ENCODE measurements at regions of chr4 and their contacts with region 1.

Region 1: DNA sequence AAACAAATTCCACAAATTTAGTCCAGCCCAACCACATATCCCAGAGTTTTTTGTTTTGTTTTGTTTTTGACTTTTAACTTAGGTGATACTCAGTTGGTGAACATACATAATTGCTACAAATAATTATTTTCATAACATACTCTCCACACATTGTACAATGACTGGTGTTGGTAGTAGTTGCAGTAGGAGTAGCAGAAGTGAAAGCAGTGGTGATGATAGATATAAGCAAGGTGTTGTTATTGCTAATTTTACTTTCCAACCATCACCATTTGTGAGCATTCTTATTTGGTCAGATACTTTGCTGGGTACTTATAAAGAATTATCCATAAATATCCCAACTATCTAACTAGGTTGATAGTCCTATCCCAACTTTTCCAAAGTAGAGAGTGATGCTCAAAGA is 47.3 kb downstream of the ARHGAP24 start:
- DNase-seq: no peak
- ATAC-seq: no peak
- H3K4me3 ChIP-seq: no peak overlapping the region
- H3K4me3 Mint-ChIP-seq: no peak overlapping the region
- H3K27ac ChIP-seq: no peak overlapping the region
- H3K27ac Mint-ChIP-seq: no peak overlapping the region
- H3K4me1 ChIP-seq: no peaks in the 10 kb centered on the region
- H3K4me1 Mint-ChIP-seq: no peaks in the 10 kb centered on the region
- H3K27me3 ChIP-seq: no peaks in the 10 kb centered on the region
- H3K27me3 Mint-ChIP-seq: no peaks in the 10 kb centered on the region

Region 2: DNA sequence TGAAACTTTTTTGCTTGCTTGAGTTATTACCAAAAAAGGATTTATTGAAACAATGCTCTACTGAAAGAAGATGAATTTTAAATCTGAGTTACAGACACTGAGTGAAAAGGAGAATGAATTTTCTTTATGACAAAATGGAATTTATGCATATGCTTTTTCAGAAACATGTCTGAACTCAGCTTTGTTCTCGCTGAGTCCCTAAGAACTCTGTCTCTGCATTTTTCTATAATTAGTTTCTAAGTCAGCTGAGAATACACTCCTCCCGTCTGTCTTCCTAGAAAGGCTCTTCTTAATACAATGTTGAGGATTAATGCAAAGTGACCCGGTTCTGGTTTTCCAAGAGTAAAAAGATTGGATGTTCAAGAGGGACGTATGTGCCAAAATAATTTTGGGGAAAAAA is 1486.7 kb before region 1 on chr4:
- CTCF ChIA-PET with region 1: no interaction called
- POLR2A ChIA-PET with region 1: no interaction called
- DNase-seq: no peak
- ATAC-seq: no peak
- H3K4me3 ChIP-seq: no peak overlapping the region
- H3K4me3 Mint-ChIP-seq: no peak overlapping the region
- H3K27ac ChIP-seq: no peak overlapping the region
- H3K27ac Mint-ChIP-seq: no peak overlapping the region
- H3K4me1 ChIP-seq: no peaks in the 10 kb centered on the region
- H3K4me1 Mint-ChIP-seq: no peaks in the 10 kb centered on the region
- H3K27me3 ChIP-seq: no peaks in the 10 kb centered on the region
- H3K27me3 Mint-ChIP-seq: peaks cover 0 to 4% of the 10 kb centered on the region in 2 donors

Region 3: DNA sequence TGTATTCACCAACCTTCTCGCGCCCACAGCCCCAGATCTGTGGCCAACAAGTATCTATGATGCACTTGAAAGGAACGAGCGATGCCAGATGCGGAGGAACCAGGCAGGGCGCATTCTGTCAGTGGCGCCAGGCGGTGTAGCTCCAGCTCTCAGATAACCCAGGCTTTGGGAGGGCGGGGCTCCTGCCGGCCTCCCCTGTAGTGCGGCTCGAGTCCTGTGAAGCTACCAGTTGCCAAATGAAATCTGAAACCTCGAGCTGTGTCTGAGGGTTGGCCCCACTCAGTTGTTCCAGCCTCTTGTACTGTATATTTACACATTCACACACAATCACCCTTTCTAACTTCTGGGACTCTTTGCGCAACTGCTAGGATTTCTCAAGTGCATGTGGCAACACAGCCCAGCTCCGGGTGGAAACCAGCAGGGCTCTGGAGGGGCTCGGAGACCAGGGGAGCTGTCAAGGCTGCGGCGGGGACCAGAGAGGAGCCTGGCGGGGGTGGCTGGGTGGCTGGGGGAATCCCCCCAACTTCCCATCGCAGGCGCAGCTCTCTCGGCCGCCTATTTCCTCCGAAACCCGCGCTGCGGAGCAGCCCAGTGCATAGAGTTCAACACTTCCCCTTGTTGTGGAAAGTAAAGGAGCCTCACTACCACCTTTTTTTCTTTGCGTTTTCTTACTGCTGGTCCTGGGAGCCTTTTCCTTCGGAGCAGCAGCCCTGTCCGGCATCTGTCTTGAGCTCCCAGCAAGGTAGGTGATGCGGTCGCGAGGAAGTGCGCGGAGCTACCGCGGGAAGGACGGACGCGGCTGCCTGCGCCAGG is 47.3 kb before region 1 on chr4 and contains the start of gene ARHGAP24:
- CTCF ChIA-PET with region 1: no interaction called
- POLR2A ChIA-PET with region 1: interaction called in 1 of 2 experiments, 14 read pairs
- DNase-seq: peak in 7 of 35 experiments; percentile 0 to 48 (median 5)
- ATAC-seq: peak in 3 of 4 experiments; percentile 19 to 39 (median 30)
- H3K4me3 ChIP-seq: peak within 1 kb of the TSS in 1 of 2 donors; percentile 40
- H3K4me3 Mint-ChIP-seq: peak within 1 kb of the TSS in 1 of 3 donors; percentile 39
- H3K27ac ChIP-seq: no peak within 1 kb of the TSS
- H3K27ac Mint-ChIP-seq: peak within 1 kb of the TSS in 1 of 2 donors; percentile 57
- H3K4me1 ChIP-seq: no peaks in the 10 kb centered on the region
- H3K4me1 Mint-ChIP-seq: peaks cover 0 to 2% (median 0%) of the 10 kb centered on the region in 3 donors
- H3K27me3 ChIP-seq: peaks cover 0 to 8% of the 10 kb centered on the region in 2 experiments
- H3K27me3 Mint-ChIP-seq: peaks cover 14 to 15% of the 10 kb centered on the region in 2 donors
- total RNA-seq, gene ARHGAP24: 0.45 to 2.7 (median 1.8) TPM

Region 4: DNA sequence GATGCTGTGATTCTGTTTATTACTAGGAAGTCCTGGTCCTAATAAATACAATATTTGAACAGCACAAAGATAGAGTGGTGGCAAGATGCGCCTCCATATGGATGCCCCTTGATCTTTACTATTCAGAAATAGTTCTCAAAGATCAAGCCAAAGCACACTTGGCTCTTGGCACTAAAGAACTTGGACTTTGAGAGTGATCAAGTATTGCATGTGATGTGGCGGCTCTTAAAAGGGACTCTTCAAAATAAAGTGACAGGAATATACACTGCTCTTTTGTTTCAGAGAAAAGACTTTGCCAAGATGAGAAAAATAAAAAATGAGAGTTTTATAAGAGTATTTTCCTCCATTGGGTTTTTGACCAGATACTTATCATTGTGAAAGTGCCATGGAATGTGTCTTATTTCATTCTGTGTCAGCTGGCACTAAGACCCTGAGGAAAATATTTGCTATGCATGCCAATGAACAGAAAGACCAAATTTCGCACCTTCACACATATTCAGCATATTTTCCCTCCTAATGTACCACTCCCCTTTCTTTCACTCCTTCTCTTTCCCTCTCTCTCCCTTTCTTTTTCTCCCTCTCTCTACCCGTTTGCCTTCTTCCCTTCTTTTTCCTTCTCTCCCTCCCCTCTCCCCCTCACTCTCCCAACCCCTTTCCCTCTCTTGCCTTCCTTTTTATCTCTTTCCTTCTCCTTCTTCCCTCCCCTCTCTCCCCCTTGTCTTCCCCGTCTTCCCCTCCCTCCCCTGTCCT is 12.2 kb before region 1 on chr4:
- CTCF ChIA-PET with region 1: no interaction called
- POLR2A ChIA-PET with region 1: no interaction called
- DNase-seq: no peak
- ATAC-seq: no peak
- H3K4me3 ChIP-seq: no peak overlapping the region
- H3K4me3 Mint-ChIP-seq: no peak overlapping the region
- H3K27ac ChIP-seq: no peak overlapping the region
- H3K27ac Mint-ChIP-seq: no peak overlapping the region
- H3K4me1 ChIP-seq: no peaks in the 10 kb centered on the region
- H3K4me1 Mint-ChIP-seq: no peaks in the 10 kb centered on the region
- H3K27me3 ChIP-seq: no peaks in the 10 kb centered on the region
- H3K27me3 Mint-ChIP-seq: no peaks in the 10 kb centered on the region

Region 5: GRCh38 chr4:85543832-85544231 is 21.6 kb after region 1 on chr4:
- CTCF ChIA-PET with region 1: interaction called in 1 of 2 experiments, 11 read pairs
- POLR2A ChIA-PET with region 1: no interaction called
- DNase-seq: no peak
- ATAC-seq: no peak
- H3K4me3 ChIP-seq: no peak overlapping the region
- H3K4me3 Mint-ChIP-seq: no peak overlapping the region
- H3K27ac ChIP-seq: no peak overlapping the region
- H3K27ac Mint-ChIP-seq: no peak overlapping the region
- H3K4me1 ChIP-seq: no peaks in the 10 kb centered on the region
- H3K4me1 Mint-ChIP-seq: no peaks in the 10 kb centered on the region
- H3K27me3 ChIP-seq: no peaks in the 10 kb centered on the region
- H3K27me3 Mint-ChIP-seq: no peaks in the 10 kb centered on the region

Region 6: GRCh38 chr4:85607624-85608023 is 85.3 kb after region 1 on chr4:
- CTCF ChIA-PET with region 1: no interaction called
- POLR2A ChIA-PET with region 1: no interaction called
- DNase-seq: no peak
- ATAC-seq: no peak
- H3K4me3 ChIP-seq: no peak overlapping the region
- H3K4me3 Mint-ChIP-seq: no peak overlapping the region
- H3K27ac ChIP-seq: no peak overlapping the region
- H3K27ac Mint-ChIP-seq: no peak overlapping the region
- H3K4me1 ChIP-seq: no peaks in the 10 kb centered on the region
- H3K4me1 Mint-ChIP-seq: no peaks in the 10 kb centered on the region
- H3K27me3 ChIP-seq: no peaks in the 10 kb centered on the region
- H3K27me3 Mint-ChIP-seq: no peaks in the 10 kb centered on the region